ENCODE measurements at regions of chr20 and their contacts with region 1.

Region 1: DNA sequence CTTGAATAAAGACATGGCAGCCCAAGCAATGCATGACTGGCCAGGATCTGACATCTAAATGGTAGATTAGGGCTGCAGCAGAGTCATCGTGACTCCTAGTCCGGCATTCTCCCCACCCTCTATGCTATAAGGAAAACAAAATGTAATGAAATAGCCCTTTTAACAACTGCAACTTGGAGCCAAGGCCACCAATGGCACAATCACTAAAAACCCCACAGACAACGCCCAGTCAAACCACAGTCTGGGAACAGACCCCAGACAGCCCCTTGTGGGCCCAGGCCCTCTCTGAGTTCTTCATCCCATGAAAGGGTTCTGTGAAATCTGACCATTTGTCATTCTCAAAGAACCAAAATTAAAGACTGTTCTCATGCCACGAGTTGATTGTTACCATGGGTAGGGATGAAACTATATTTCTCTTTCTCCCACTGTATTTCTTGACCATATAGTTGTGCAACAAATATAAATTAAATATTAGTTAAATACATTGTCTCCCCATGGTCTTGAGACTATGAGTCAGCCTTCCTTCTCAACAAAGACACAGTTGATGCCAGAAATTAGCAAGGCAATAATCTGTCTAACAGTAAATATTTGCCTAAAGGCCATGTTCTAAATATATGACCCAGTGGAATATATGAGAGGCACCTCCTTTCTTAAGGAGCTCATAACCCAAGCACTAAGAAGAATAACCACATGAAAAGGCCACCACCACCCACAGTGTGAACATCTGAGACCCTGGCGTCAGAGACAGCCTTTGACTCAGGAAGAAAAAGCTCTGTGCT is 85.6 kb upstream of the SSTR4 start:
- DNase-seq: no peak
- ATAC-seq: no peak
- H3K4me3 ChIP-seq: no peak overlapping the region
- H3K27ac ChIP-seq: no peak overlapping the region
- H3K4me1 ChIP-seq: no peaks in the 10 kb centered on the region
- H3K27me3 ChIP-seq: peaks cover 0 to 36% (median 23%) of the 10 kb centered on the region in 7 donors
- CTCF ChIP-seq: no peak

Region 2: GRCh38 chr20:22861990-22862389 is 87.5 kb before region 1 on chr20:
- intact Hi-C with region 1: no loop called
- DNase-seq: peak; percentile 43 to 68
- ATAC-seq: peak; percentile 75 to 93 (median 84)
- H3K4me3 ChIP-seq: no peak overlapping the region
- H3K27ac ChIP-seq: peak overlapping the region in 9 of 10 donors; percentile 39 to 85 (median 71)
- H3K4me1 ChIP-seq: peaks cover 0 to 35% (median 5%) of the 10 kb centered on the region in 9 donors
- H3K27me3 ChIP-seq: peaks cover 0 to 6% (median 0%) of the 10 kb centered on the region in 7 donors
- CTCF ChIP-seq: no peak

Region 3: GRCh38 chr20:23435626-23436539 is 486.4 kb after region 1 on chr20:
- intact Hi-C with region 1: no loop called
- DNase-seq: peak; percentile 24 to 29
- ATAC-seq: peak in 5 of 8 donors; percentile 22 to 52 (median 34)
- H3K4me3 ChIP-seq: no peak overlapping the region
- H3K27ac ChIP-seq: no peak overlapping the region
- H3K4me1 ChIP-seq: peaks cover 0 to 14% (median 3%) of the 10 kb centered on the region in 9 donors
- H3K27me3 ChIP-seq: no peaks in the 10 kb centered on the region
- CTCF ChIP-seq: no peak

Region 4: DNA sequence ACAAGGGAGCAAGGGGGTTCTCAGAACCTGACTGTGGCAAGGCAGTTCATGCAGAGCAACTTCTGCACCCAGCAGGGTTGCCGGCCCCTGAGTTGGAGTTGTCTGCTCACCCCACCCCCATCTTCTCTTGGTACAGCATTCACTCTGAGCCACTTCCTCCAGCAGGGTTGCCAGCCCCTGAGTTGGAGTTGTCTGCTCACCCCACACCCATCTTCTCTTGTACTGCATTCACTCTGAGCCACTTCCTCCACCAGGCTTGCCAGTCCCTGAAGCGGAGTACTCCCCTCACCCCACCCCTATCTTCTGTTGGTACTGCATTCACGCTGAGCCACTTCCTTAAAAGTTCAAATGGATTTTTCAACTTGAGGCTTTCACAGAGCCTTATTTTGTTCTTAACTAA is 1440.2 kb after region 1 on chr20:
- intact Hi-C with region 1: loop called in 1 of 10 experiments (anchors 10 kb)
- DNase-seq: peak in 1 of 2 donors; percentile 20
- ATAC-seq: peak in 7 of 8 donors; percentile 31 to 89 (median 44)
- H3K4me3 ChIP-seq: no peak overlapping the region
- H3K27ac ChIP-seq: no peak overlapping the region
- H3K4me1 ChIP-seq: peaks cover 0 to 9% (median 0%) of the 10 kb centered on the region in 9 donors
- H3K27me3 ChIP-seq: peaks cover 0 to 47% (median 14%) of the 10 kb centered on the region in 7 donors
- CTCF ChIP-seq: no peak